Natural killer cell (primary cell): ENCODE measurements at regions of chr7 and their contacts with region 1.

Region 1: DNA sequence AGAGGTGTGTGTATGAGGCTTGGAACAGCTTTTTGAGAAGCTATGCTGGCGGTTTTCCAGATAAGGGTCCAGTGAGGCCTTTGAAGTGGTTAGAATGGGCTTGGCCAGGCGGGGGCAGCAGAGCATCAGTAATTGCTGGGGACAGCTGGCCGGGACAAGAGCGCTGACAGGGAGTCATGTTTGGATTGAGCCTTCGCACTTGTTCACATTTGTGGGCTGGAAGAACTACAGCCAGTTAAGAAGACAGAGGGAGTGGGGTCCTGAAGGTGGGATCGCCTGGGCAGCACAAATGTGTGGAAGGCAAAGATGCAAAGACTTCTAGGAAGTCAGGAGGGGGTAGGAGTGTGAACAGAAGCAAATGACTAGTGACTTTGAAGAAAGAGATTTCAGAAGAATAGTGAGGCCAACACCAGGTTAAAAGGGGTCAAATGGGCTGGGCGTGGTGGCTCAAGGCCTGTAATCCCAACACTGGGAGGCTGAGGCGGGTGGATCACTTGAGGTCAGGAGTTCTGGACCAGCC is 12.7 kb upstream of the SDHAF3 start:
- DNase-seq: peak; percentile 72
- ATAC-seq: peak; percentile 84 to 98 (median 92)
- H3K4me3 ChIP-seq: no peak overlapping the region
- H3K4me3 Mint-ChIP-seq: no peak overlapping the region
- H3K27ac ChIP-seq: no peak overlapping the region
- H3K27ac Mint-ChIP-seq: no peak overlapping the region
- H3K4me1 ChIP-seq: no peaks in the 10 kb centered on the region
- H3K4me1 Mint-ChIP-seq: no peaks in the 10 kb centered on the region
- H3K27me3 ChIP-seq: no peaks in the 10 kb centered on the region
- H3K27me3 Mint-ChIP-seq: peaks cover 25 to 34% of the 10 kb centered on the region in 2 donors
- CTCF ChIP-seq: peak; percentile 81

Region 2: DNA sequence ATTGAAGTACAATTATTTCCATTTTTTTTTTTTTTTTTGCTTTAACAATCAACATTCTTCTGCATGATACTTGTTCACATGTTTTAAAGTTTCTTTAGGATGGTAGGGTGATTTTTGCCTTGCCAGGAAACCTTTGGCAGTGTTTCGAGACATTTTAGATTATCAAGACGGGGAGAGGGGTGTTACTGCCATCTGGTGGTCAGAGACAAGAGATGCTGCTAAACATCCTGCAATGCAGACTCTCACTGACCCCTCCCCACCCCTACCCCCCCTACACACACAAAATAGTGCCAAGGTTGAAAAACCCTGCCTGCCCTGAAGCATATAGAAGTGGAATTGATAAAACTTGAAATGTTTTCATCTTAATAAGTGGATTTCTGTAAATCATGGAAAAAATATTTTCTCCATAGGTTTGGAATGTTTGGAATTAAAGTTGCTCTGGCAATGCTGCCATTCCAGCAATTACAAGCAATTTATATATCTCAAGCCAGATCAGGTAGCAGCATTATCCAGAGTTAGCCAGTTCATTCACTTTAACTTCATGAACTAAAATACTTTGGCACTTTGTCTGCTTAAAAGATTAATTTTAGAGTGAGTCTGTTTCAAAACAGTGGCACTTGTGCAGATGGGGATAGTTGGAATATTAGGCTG is 74.8 kb after region 1 on chr7:
- intact Hi-C with region 1: loop called (anchors 1 kb)
- DNase-seq: peak in 1 of 2 donors; percentile 75
- ATAC-seq: peak; percentile 70 to 84 (median 76)
- H3K4me3 ChIP-seq: no peak overlapping the region
- H3K4me3 Mint-ChIP-seq: no peak overlapping the region
- H3K27ac ChIP-seq: no peak overlapping the region
- H3K27ac Mint-ChIP-seq: no peak overlapping the region
- H3K4me1 ChIP-seq: no peaks in the 10 kb centered on the region
- H3K4me1 Mint-ChIP-seq: peaks cover 5 to 9% of the 10 kb centered on the region in 2 donors
- H3K27me3 ChIP-seq: no peaks in the 10 kb centered on the region
- H3K27me3 Mint-ChIP-seq: no peaks in the 10 kb centered on the region
- CTCF ChIP-seq: peak; percentile 80

Region 3: GRCh38 chr7:97835296-97836138 is 730.7 kb after region 1 on chr7:
- intact Hi-C with region 1: loop called (anchors 1 kb)
- DNase-seq: peak; percentile 33 to 71
- ATAC-seq: peak; percentile 52 to 82 (median 73)
- H3K4me3 ChIP-seq: no peak overlapping the region
- H3K4me3 Mint-ChIP-seq: no peak overlapping the region
- H3K27ac ChIP-seq: no peak overlapping the region
- H3K27ac Mint-ChIP-seq: no peak overlapping the region
- H3K4me1 ChIP-seq: no peaks in the 10 kb centered on the region
- H3K4me1 Mint-ChIP-seq: no peaks in the 10 kb centered on the region
- H3K27me3 ChIP-seq: no peaks in the 10 kb centered on the region
- H3K27me3 Mint-ChIP-seq: peaks cover 20 to 48% of the 10 kb centered on the region in 2 donors
- CTCF ChIP-seq: peak; percentile 69